ENCODE measurements at regions of chr17 and their contacts with region 1.

Region 1: DNA sequence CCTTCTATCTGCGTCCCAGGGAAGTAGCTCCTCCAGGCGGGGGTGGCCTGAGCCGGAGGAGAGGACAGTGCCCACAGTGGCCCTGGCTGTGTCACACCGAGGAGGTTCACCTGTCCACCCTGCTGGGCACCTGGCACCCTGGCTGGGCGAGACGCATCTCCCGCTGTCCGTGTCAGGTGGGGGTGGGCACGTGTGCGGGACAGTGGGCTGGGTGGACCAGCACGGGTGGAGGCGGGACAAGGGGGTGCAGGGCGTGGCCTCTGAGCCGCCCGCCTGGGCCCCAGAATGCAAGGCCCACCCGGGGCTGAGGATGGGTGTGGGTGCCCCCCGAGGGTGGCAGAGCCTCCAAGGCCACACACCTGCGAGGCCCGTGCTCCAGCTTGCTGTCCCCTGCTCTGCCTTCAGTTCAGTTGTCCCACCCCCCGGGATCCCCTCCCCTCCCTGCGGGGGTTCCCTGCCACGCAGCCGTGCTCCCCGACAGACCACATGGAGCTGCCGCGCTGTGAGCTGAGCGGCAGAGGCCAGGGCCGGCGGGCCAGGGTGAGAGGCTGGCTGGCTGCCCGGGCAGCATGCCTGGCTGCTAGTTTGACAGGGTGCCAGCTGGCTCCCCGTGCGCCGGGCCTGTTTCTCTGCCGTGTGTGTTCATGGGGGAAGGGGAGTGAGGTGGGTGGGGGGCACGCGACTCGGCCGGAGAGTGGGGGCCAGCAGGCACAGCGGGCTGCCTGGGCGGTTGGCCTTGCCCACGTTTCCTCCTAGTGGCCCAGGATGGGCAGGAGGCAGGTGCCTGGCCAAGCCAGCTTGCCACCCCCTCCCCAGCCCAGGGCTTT is 33.9 kb downstream of the BAHCC1 start:
- DNase-seq: peak; percentile 76 to 89 (median 81)
- H3K4me3 ChIP-seq: peak overlapping the region in 4 of 7 experiments; percentile 28 to 59 (median 52)
- H3K27ac ChIP-seq: peak overlapping the region; percentile 33 to 60
- H3K4me1 ChIP-seq: peaks cover 0 to 71% (median 55%) of the 10 kb centered on the region in 4 experiments
- H3K27me3 ChIP-seq: no peaks in the 10 kb centered on the region

Region 2: DNA sequence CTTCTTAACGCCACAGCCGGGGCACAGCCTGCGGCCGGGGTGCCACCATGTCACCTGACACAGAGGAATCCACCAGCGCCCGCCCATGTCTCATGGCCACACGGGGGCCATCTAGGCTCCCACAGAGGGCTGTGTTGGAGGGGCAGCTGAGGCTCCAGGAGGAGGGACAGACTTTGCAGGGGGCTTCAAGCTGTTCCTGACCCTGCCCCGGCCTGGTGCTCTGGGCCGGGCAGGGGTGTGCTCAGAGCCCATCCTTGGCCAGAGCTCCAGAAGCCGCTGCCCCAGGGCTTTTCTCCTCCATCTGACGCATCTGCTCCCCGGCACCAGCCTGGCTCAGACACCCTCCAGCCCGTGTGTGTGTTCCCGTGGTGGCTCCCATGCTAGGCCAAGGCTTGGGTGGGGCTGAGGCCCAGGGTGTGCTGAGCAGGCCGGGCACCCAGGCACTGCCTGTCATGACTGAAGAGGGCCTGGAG is 126.3 kb before region 1 on chr17:
- CTCF ChIA-PET with region 1: no interaction called
- POLR2A ChIA-PET with region 1: no interaction called
- DNase-seq: peak in 1 of 3 donors; percentile 22
- H3K4me3 ChIP-seq: no peak overlapping the region
- H3K27ac ChIP-seq: no peak overlapping the region
- H3K4me1 ChIP-seq: peaks cover 0 to 7% (median 0%) of the 10 kb centered on the region in 4 experiments
- H3K27me3 ChIP-seq: no peaks in the 10 kb centered on the region

Region 3: DNA sequence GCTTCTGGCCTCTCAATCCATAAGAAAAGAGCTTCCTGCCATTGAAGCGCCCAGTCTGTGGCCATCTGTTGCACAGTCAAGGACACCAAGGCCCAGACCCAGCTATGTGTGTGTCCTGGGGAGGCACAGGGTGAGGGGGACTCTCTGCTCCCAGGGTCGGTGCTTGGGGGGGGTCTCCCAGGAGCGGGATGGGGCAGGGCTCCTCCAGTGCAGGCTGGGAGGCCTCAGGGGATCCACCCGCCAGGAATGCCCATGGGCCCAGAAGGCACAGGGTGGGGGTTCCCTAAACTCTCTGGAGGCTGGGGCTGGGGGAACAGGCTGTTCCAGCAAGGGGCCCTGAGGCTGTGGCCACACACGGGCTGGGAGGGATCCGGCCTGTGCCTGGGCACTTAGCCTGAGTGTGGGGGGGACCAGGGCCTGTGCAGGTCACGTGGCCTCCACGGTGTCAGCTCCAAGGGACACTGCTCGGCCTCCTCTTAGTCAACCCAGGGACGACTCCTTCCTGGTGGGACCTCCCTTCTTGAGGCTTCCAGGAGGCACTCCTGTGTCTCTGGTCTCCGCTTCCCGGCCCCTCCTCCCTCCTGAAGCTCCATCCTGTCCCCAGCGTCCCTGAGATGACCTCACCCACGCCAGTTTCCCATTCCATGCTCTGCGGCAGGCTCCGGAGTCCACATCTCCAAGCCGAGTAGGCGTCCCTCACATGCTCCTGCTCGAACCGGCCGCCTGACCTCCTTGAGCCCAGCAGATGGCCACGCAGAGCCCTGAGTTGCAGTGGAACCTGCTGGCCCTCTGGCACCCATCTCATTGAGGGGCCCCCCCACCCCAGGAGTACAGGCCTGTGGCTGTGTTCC is 57.0 kb before region 1 on chr17:
- CTCF ChIA-PET with region 1: no interaction called
- POLR2A ChIA-PET with region 1: no interaction called
- DNase-seq: peak; percentile 38 to 64 (median 63)
- H3K4me3 ChIP-seq: no peak overlapping the region
- H3K27ac ChIP-seq: no peak overlapping the region
- H3K4me1 ChIP-seq: peaks cover 0 to 6% (median under 1%) of the 10 kb centered on the region in 4 experiments
- H3K27me3 ChIP-seq: no peaks in the 10 kb centered on the region

Region 4: GRCh38 chr17:81394921-81395599 is 34.1 kb before region 1 on chr17 and contains the start of gene BAHCC1:
- CTCF ChIA-PET with region 1: interaction called, 8 read pairs
- POLR2A ChIA-PET with region 1: interaction called, 57 read pairs
- DNase-seq: peak; percentile 99
- H3K4me3 ChIP-seq: peak within 1 kb of the TSS; percentile 46 to 93 (median 81)
- H3K27ac ChIP-seq: peak within 1 kb of the TSS; percentile 15 to 70
- H3K4me1 ChIP-seq: peaks cover 14 to 66% (median 63%) of the 10 kb centered on the region in 4 experiments
- H3K27me3 ChIP-seq: no peaks in the 10 kb centered on the region

Region 5: GRCh38 chr17:81401723-81402529 is 27.2 kb before region 1 on chr17:
- CTCF ChIA-PET with region 1: interaction called, 10 read pairs
- POLR2A ChIA-PET with region 1: interaction called, 57 read pairs
- DNase-seq: peak; percentile 59 to 66 (median 64)
- H3K4me3 ChIP-seq: peak overlapping the region in 4 of 7 experiments; percentile 10 to 93 (median 39)
- H3K27ac ChIP-seq: no peak overlapping the region
- H3K4me1 ChIP-seq: peaks cover 11 to 80% (median 49%) of the 10 kb centered on the region in 4 experiments
- H3K27me3 ChIP-seq: no peaks in the 10 kb centered on the region

Region 6: DNA sequence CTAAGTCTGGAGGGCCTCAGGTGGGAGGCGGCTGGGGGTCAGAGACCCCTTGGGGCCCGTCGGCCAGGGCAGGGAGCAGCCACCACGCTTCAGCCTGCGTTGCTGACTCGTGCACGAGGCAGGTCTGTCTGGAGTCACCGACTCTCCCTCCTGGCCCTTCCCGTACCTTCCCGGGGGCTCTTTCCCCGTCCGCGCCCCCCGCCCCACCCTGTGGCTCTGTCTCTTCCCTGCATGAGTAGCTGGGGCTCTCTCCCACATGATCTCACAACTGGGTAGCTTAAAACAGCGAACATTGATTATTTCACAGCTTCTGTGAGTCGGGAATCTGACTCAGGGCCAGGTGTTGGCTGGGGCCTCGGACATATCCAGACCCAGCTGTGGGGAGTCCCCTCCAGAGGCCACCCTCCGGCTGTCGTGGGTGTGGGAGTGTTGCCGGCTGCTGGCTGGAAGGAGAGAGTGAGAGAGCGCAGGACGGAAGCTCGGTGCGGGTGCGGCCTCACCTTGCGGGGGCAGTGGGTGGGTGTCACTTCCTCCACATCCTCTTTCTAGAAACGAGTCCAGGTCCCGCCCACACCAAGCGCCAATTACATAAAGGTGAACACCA is 16.6 kb before region 1 on chr17:
- CTCF ChIA-PET with region 1: interaction called, 12 read pairs
- POLR2A ChIA-PET with region 1: interaction called, 6 read pairs
- DNase-seq: peak; percentile 71 to 92 (median 89)
- H3K4me3 ChIP-seq: peak overlapping the region in 3 of 7 experiments; percentile 36 to 53 (median 48)
- H3K27ac ChIP-seq: no peak overlapping the region
- H3K4me1 ChIP-seq: peaks cover 2 to 65% (median 43%) of the 10 kb centered on the region in 4 experiments
- H3K27me3 ChIP-seq: no peaks in the 10 kb centered on the region

Region 7: GRCh38 chr17:81440876-81441244 is 11.7 kb after region 1 on chr17:
- CTCF ChIA-PET with region 1: interaction called, 35 read pairs
- POLR2A ChIA-PET with region 1: interaction called, 5 read pairs
- DNase-seq: peak in 2 of 3 donors; percentile 57 to 62
- H3K4me3 ChIP-seq: no peak overlapping the region
- H3K27ac ChIP-seq: no peak overlapping the region
- H3K4me1 ChIP-seq: peaks cover 0 to 54% (median 49%) of the 10 kb centered on the region in 4 experiments
- H3K27me3 ChIP-seq: no peaks in the 10 kb centered on the region

Region 8: DNA sequence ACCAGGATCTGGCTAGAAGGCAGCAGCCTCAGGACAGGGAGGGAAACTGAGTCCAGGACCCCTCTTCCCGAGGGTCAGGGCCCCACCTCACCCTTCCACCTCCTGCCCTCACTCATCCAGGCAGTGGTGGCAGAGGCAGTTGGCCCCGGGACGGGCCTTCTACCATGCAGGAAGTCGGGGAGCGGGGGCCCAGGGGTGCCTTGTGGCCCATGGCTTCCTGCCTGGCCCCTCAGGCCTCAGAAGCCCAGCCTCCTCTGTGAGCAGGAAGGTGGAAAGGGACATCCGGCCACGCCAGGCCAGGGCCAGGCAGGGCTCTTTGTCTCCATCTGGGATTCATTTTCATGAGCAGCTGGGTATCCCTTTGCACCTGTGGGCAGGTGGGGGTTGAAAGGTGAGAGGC is 24.6 kb after region 1 on chr17:
- CTCF ChIA-PET with region 1: interaction called, 8 read pairs
- POLR2A ChIA-PET with region 1: interaction called, 17 read pairs
- DNase-seq: peak; percentile 52 to 83 (median 78)
- H3K4me3 ChIP-seq: peak overlapping the region in 4 of 7 experiments; percentile 39 to 57 (median 49)
- H3K27ac ChIP-seq: peak overlapping the region; percentile 54 to 83
- H3K4me1 ChIP-seq: peaks cover 0 to 74% (median 57%) of the 10 kb centered on the region in 4 experiments
- H3K27me3 ChIP-seq: no peaks in the 10 kb centered on the region

Region 9: DNA sequence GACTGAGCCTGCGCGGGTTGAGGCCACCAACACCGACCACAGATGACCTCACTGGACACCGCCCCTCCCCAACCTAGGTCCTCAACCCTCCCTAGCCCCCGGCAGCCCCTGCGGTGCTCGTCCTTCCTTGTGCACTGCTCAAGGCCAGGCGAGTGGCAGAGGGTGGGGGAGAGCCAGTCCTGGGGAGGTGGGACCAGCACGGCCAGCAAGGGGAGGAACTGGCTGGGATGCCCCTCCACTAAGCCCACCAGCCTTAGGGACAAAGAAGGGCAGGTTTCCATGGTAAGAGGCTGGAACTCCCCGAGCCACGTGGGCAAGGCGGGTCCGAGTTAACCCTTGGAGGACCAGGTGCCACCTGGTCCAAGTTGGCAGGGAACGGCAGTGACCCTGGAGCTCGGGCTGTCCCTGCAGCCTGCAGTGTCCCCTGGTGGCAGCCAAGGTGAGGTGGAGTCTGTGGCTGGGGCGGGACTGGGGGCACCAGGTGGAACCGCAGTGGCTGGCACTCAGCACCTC is 108.2 kb after region 1 on chr17:
- CTCF ChIA-PET with region 1: no interaction called
- POLR2A ChIA-PET with region 1: no interaction called
- DNase-seq: peak in 2 of 3 donors; percentile 66 to 71
- H3K4me3 ChIP-seq: no peak overlapping the region
- H3K27ac ChIP-seq: no peak overlapping the region
- H3K4me1 ChIP-seq: peaks cover 0 to 19% (median 9%) of the 10 kb centered on the region in 4 experiments
- H3K27me3 ChIP-seq: peaks cover 0 to 53% (median 10%) of the 10 kb centered on the region in 5 experiments

Measured in common myeloid progenitor, CD34-positive (primary cell).